Dorsolateral prefrontal cortex (tissue), 120 donors: ENCODE measurements at regions of chr15 and their contacts with region 1.

Region 1: GRCh38 chr15:68559345-68560310 is 19.2 kb upstream of the CORO2B start:
- DNase-seq: peak; percentile 72 to 89 (median 80)
- H3K4me3 ChIP-seq: peak overlapping the region; percentile 38 to 73 (median 58)
- H3K27ac ChIP-seq: peak overlapping the region in 17 of 59 donors; percentile 1 to 70 (median 40)
- H3K27me3 ChIP-seq: peaks cover 0 to 3% (median 0%) of the 10 kb centered on the region in 45 donors
- CTCF ChIP-seq: peak; percentile 68 to 100 (median 98)

Region 2: GRCh38 chr15:68210821-68211655 is 348.6 kb before region 1 on chr15:
- intact Hi-C with region 1: no loop called
- DNase-seq: peak; percentile 79 to 92 (median 81)
- H3K4me3 ChIP-seq: peak overlapping the region in 57 of 59 donors; percentile 10 to 68 (median 49)
- H3K27ac ChIP-seq: peak overlapping the region in 54 of 59 donors; percentile 36 to 93 (median 73)
- H3K27me3 ChIP-seq: no peaks in the 10 kb centered on the region
- CTCF ChIP-seq: peak; percentile 54 to 98 (median 92)

Region 3: GRCh38 chr15:68252925-68253534 is 306.6 kb before region 1 on chr15:
- intact Hi-C with region 1: loop called in 1 of 2 experiments (anchors 10 kb)
- DNase-seq: peak in 2 of 10 donors; percentile 29 to 63
- H3K4me3 ChIP-seq: peak overlapping the region in 44 of 59 donors; percentile 17 to 63 (median 37)
- H3K27ac ChIP-seq: peak overlapping the region in 28 of 59 donors; percentile 1 to 70 (median 27)
- H3K27me3 ChIP-seq: no peaks in the 10 kb centered on the region
- CTCF ChIP-seq: peak; percentile 77 to 98 (median 92)

Region 4: DNA sequence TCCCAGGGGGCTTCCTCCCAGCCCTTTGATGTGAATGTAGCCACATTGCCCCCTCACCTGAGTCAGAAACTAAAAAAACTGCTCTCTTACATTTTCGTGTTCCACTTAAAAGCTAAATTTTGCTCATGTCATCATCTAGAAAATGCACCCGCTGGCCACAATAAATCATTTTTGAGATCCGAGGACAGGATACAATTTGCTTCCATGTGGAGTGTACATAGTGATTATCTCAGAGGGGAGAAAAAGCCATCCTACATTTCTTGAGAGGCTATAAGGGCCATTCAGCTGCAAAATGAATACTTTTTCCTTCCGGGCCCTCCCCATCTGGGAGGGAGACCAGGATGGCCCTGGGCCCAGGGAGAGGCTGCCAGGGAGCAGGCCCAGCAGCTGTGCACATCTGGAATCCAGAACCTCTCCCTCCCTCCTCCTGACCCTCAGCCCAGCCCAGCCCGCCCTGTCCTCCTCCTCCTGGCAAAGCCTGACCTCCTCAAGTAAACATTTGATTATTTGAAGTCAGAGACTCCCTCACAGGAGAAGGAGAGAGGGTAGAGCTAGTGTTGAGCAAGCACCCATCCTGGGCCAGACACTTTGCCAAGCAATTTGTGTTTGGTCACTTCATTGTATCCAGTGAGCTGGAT is 78.3 kb after region 1 on chr15:
- intact Hi-C with region 1: loop called in 1 of 2 experiments (anchors 2 kb)
- DNase-seq: no peak
- H3K4me3 ChIP-seq: no peak overlapping the region
- H3K27ac ChIP-seq: peak overlapping the region in 48 of 59 donors; percentile 1 to 92 (median 70)
- H3K27me3 ChIP-seq: no peaks in the 10 kb centered on the region
- CTCF ChIP-seq: no peak

Region 5: GRCh38 chr15:68672781-68673205 is 113.2 kb after region 1 on chr15:
- intact Hi-C with region 1: loop called (anchors 1 to 2 kb)
- DNase-seq: peak in 3 of 10 donors; percentile 26 to 41 (median 38)
- H3K4me3 ChIP-seq: no peak overlapping the region
- H3K27ac ChIP-seq: peak overlapping the region in 15 of 59 donors; percentile 5 to 96 (median 38)
- H3K27me3 ChIP-seq: no peaks in the 10 kb centered on the region
- CTCF ChIP-seq: peak in 46 of 56 donors; percentile 16 to 70 (median 45)

Region 6: DNA sequence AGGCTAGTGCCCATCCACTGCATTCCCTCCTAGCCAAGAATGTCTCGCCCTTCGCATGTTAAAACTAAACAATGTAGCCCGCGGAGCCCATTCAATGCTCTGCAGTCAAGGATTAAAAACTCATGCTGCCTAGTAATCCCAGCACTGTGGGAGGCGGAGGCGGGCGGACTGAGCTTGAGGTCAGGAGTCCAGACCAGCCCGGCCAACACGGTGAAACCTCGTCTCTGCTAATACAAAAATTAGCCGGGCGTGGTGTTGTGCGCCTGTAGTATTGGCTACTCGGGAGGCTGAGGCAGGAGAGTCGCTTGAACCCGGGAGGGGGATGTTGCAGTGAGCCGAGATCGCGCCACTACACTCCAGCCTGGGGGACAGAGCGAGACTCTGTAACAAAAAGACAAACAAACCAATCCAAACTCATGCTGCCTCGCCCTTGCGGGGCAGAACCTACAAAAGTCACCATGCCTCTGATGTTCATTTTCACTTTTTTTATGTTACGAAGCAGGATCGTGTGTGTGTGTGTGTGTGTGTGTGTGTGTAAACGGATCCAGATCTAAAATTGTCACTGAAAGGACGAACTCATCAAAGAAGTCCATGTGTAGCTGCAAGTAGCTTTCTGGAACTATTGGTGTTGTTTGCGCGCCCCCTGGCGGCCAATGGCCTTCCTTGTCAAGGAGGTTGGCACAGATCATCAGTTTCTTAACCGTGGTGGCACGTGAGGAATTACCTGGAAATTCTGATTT is 315.9 kb after region 1 on chr15:
- intact Hi-C with region 1: loop called (anchors 2 to 5 kb)
- DNase-seq: peak; percentile 90 to 96 (median 94)
- H3K4me3 ChIP-seq: peak overlapping the region; percentile 14 to 73 (median 51)
- H3K27ac ChIP-seq: peak overlapping the region in 2 of 59 donors; percentile 27 to 44
- H3K27me3 ChIP-seq: no peaks in the 10 kb centered on the region
- CTCF ChIP-seq: peak; percentile 78 to 96 (median 92)